CD4-positive, alpha-beta memory T cell (primary cell): ENCODE measurements at regions of chrX and their contacts with region 1.

Region 1: GRCh38 chrX:17860811-17861488 is at the start of gene RAI2:
- DNase-seq: peak in 1 of 5 donors; percentile 3
- H3K4me3 ChIP-seq: no peak within 1 kb of the TSS
- H3K4me3 Mint-ChIP-seq: peak within 1 kb of the TSS; percentile 62 to 82 (median 74)
- H3K27ac ChIP-seq: no peak within 1 kb of the TSS
- H3K27ac Mint-ChIP-seq: peak within 1 kb of the TSS in 1 of 7 donors; percentile 70
- H3K4me1 ChIP-seq: no peaks in the 10 kb centered on the region
- H3K4me1 Mint-ChIP-seq: peaks cover 3 to 4% (median 4%) of the 10 kb centered on the region in 4 donors
- H3K27me3 ChIP-seq: no peaks in the 10 kb centered on the region
- H3K27me3 Mint-ChIP-seq: peaks cover 19 to 34% of the 10 kb centered on the region in 2 donors
- total RNA-seq, gene RAI2: 1.2 to 1.4 TPM

Region 2: GRCh38 chrX:17564689-17565409 is 296.1 kb before region 1 on chrX:
- CTCF ChIA-PET with region 1: no interaction called
- POLR2A ChIA-PET with region 1: no interaction called
- intact Hi-C with region 1: no loop called
- DNase-seq: no peak
- H3K4me3 ChIP-seq: no peak overlapping the region
- H3K4me3 Mint-ChIP-seq: no peak overlapping the region
- H3K27ac ChIP-seq: no peak overlapping the region
- H3K27ac Mint-ChIP-seq: no peak overlapping the region
- H3K4me1 ChIP-seq: no peaks in the 10 kb centered on the region
- H3K4me1 Mint-ChIP-seq: peaks cover 0 to 5% (median 0%) of the 10 kb centered on the region in 4 donors
- H3K27me3 ChIP-seq: no peaks in the 10 kb centered on the region
- H3K27me3 Mint-ChIP-seq: peaks cover 0 to 1% of the 10 kb centered on the region in 2 donors

Region 3: GRCh38 chrX:17744896-17745523 is 115.9 kb before region 1 on chrX:
- CTCF ChIA-PET with region 1: no interaction called
- POLR2A ChIA-PET with region 1: no interaction called
- intact Hi-C with region 1: loop called (anchors 10 kb)
- DNase-seq: peak in 2 of 5 donors; percentile 6 to 9
- H3K4me3 ChIP-seq: no peak overlapping the region
- H3K4me3 Mint-ChIP-seq: no peak overlapping the region
- H3K27ac ChIP-seq: no peak overlapping the region
- H3K27ac Mint-ChIP-seq: no peak overlapping the region
- H3K4me1 ChIP-seq: peaks cover 6% of the 10 kb centered on the region
- H3K4me1 Mint-ChIP-seq: peaks cover 0 to 10% (median 7%) of the 10 kb centered on the region in 4 donors
- H3K27me3 ChIP-seq: no peaks in the 10 kb centered on the region
- H3K27me3 Mint-ChIP-seq: no peaks in the 10 kb centered on the region